Activated T-helper 2 cell treated with anti-CD3 and anti-CD28 coated beads, Interferon-gamma antibody, Interleukin-2, Interleukin-4, amounts not matched to agents 10 μg/mL and 5 μg/mL and 100 μg/mL, durations not matched to agents 14 hours and 24 hours and 36 hours (primary cell): ENCODE measurements at regions of chr3 and their contacts with region 1.

Region 1: DNA sequence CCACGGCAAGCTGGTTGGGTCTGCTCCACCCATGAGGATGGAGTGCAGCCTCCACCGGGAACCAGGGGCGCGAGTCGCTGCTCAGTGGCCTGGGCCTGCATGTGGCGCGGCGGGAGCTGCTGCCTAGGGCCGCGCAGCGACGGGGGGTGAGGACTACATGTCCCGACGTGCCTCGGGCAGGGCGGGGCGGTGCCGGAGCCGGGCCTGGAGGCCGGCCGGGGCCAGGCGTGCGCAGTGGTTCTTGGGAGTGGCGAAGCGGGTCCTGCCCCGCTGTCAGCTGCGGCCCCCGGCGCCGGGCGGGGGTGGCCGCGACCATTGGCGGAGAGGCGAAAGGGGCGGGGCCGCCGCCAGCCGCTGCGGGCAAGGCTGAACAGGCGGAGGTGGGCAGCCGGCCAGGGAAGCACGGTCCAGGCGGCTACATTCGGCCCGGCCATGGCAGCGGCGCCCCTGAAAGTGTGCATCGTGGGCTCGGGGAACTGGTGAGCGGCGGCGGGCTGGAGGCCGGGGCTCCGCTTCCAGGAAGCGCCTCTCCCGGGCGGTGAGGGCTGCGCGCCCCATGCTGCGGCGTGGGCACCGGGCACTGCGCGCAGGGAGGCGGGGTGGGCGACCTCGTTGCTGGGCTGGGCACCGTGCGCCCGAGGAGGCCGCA is at the start of gene GPD1L:
- DNase-seq: peak; percentile 92
- H3K4me3 Mint-ChIP-seq: peak within 1 kb of the TSS; percentile 93
- H3K27ac Mint-ChIP-seq: peak within 1 kb of the TSS; percentile 80
- H3K4me1 Mint-ChIP-seq: peaks cover 27% of the 10 kb centered on the region
- H3K27me3 Mint-ChIP-seq: no peaks in the 10 kb centered on the region
- total RNA-seq, gene GPD1L: 18.9 and 19.8 TPM in 2 replicates

Region 2: DNA sequence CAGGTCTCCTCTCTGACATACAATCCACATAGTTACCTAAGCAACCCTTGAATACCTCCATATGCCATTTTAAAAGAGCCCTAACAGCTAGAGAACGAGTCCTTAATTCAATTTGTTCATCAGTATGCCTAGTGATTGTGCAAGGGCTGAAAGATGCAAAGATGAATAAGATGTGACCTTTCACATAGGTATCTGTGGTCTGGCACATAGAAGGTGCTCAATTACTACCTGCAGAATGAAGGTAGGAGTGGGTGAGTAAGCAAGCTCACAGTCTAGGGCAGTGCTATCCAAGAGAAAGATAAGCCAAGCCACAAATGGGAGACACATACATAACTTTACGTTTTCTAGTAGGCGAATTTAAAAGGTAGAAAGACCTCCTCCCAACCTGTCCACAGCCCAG is 283.2 kb before region 1 on chr3:
- intact Hi-C with region 1: no loop called
- DNase-seq: no peak
- H3K4me3 Mint-ChIP-seq: no peak overlapping the region
- H3K27ac Mint-ChIP-seq: no peak overlapping the region
- H3K4me1 Mint-ChIP-seq: no peaks in the 10 kb centered on the region
- H3K27me3 Mint-ChIP-seq: peaks cover 1% of the 10 kb centered on the region

Region 3: GRCh38 chr3:32117324-32117723 is 10.9 kb after region 1 on chr3:
- intact Hi-C with region 1: loop called (anchors 1 kb)
- DNase-seq: no peak
- H3K4me3 Mint-ChIP-seq: no peak overlapping the region
- H3K27ac Mint-ChIP-seq: no peak overlapping the region
- H3K4me1 Mint-ChIP-seq: peaks cover 41% of the 10 kb centered on the region
- H3K27me3 Mint-ChIP-seq: peaks cover 2% of the 10 kb centered on the region

Region 4: GRCh38 chr3:32684800-32685542 is 578.6 kb after region 1 on chr3 and contains the start of gene CNOT10:
- intact Hi-C with region 1: loop called (anchors 5 kb)
- DNase-seq: peak; percentile 97
- H3K4me3 Mint-ChIP-seq: peak within 1 kb of the TSS; percentile 87
- H3K27ac Mint-ChIP-seq: peak within 1 kb of the TSS; percentile 90
- H3K4me1 Mint-ChIP-seq: peaks cover 27% of the 10 kb centered on the region
- H3K27me3 Mint-ChIP-seq: peaks cover 3% of the 10 kb centered on the region
- total RNA-seq, gene CNOT10: 51.5 and 53.5 TPM in 2 replicates